ENCODE measurements at regions of chr1 and their contacts with region 1.

Region 1: GRCh38 chr1:19390901-19391595 is 78.9 kb downstream of the SLC66A1 start:
- DNase-seq: peak; percentile 45 to 87
- ATAC-seq: peak; percentile 74 to 85 (median 81)
- H3K4me3 ChIP-seq: peak overlapping the region; percentile 12
- H3K4me3 Mint-ChIP-seq: peak overlapping the region; percentile 90
- H3K27ac ChIP-seq: peak overlapping the region; percentile 56
- H3K27ac Mint-ChIP-seq: peak overlapping the region; percentile 94 to 96
- H3K4me1 ChIP-seq: peaks cover 56% of the 10 kb centered on the region
- H3K4me1 Mint-ChIP-seq: peaks cover 64 to 83% of the 10 kb centered on the region in 2 donors
- H3K27me3 ChIP-seq: no peaks in the 10 kb centered on the region
- H3K27me3 Mint-ChIP-seq: no peaks in the 10 kb centered on the region
- CTCF ChIP-seq: peak; percentile 82

Region 2: GRCh38 chr1:19189270-19189669 is 201.8 kb before region 1 on chr1:
- intact Hi-C with region 1: no loop called
- DNase-seq: no peak
- ATAC-seq: no peak
- H3K4me3 ChIP-seq: no peak overlapping the region
- H3K4me3 Mint-ChIP-seq: no peak overlapping the region
- H3K27ac ChIP-seq: no peak overlapping the region
- H3K27ac Mint-ChIP-seq: no peak overlapping the region
- H3K4me1 ChIP-seq: no peaks in the 10 kb centered on the region
- H3K4me1 Mint-ChIP-seq: peaks cover 0 to 9% of the 10 kb centered on the region in 2 donors
- H3K27me3 ChIP-seq: no peaks in the 10 kb centered on the region
- H3K27me3 Mint-ChIP-seq: no peaks in the 10 kb centered on the region
- CTCF ChIP-seq: no peak

Region 3: GRCh38 chr1:19462781-19463503 is 71.9 kb after region 1 on chr1:
- intact Hi-C with region 1: loop called (anchors 5 kb)
- DNase-seq: peak; percentile 39 to 87
- ATAC-seq: peak; percentile 86 to 93 (median 89)
- H3K4me3 ChIP-seq: no peak overlapping the region
- H3K4me3 Mint-ChIP-seq: peak overlapping the region; percentile 91
- H3K27ac ChIP-seq: peak overlapping the region; percentile 85
- H3K27ac Mint-ChIP-seq: peak overlapping the region; percentile 89 to 92
- H3K4me1 ChIP-seq: peaks cover 86% of the 10 kb centered on the region
- H3K4me1 Mint-ChIP-seq: peaks cover 63 to 70% of the 10 kb centered on the region in 2 donors
- H3K27me3 ChIP-seq: no peaks in the 10 kb centered on the region
- H3K27me3 Mint-ChIP-seq: no peaks in the 10 kb centered on the region
- CTCF ChIP-seq: no peak

Region 4: GRCh38 chr1:19477284-19478249 is 86.5 kb after region 1 on chr1:
- intact Hi-C with region 1: loop called (anchors 5 kb)
- DNase-seq: peak; percentile 55 to 74
- ATAC-seq: peak; percentile 73 to 85 (median 77)
- H3K4me3 ChIP-seq: peak overlapping the region; percentile 34
- H3K4me3 Mint-ChIP-seq: peak overlapping the region; percentile 88
- H3K27ac ChIP-seq: peak overlapping the region; percentile 97
- H3K27ac Mint-ChIP-seq: peak overlapping the region; percentile 97 to 98
- H3K4me1 ChIP-seq: peaks cover 85% of the 10 kb centered on the region
- H3K4me1 Mint-ChIP-seq: peaks cover 79 to 80% of the 10 kb centered on the region in 2 donors
- H3K27me3 ChIP-seq: no peaks in the 10 kb centered on the region
- H3K27me3 Mint-ChIP-seq: no peaks in the 10 kb centered on the region
- CTCF ChIP-seq: no peak

Region 5: DNA sequence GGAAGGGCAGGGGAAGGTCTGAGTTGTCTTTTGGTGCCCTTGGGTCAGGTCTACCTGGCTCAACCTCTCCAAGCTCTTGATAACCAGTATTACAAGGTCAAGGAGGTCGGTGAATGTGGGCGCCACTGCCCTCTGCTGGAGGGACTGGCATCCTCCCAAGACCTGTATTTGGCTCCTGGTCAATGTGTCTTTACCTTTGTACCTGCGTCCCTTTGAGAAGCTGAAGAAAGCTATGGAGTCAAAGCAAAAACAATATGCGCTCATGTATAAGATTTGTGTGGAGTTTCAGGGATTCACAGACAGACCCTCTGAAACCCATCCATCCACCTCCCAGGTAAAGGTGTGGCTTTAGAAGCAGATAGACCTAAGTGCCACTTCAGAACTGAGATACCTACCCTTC is 191.3 kb after region 1 on chr1:
- intact Hi-C with region 1: loop called (anchors 1 kb)
- DNase-seq: peak; percentile 70 to 86
- ATAC-seq: peak; percentile 77 to 97 (median 95)
- H3K4me3 ChIP-seq: no peak overlapping the region
- H3K4me3 Mint-ChIP-seq: no peak overlapping the region
- H3K27ac ChIP-seq: no peak overlapping the region
- H3K27ac Mint-ChIP-seq: no peak overlapping the region
- H3K4me1 ChIP-seq: no peaks in the 10 kb centered on the region
- H3K4me1 Mint-ChIP-seq: no peaks in the 10 kb centered on the region
- H3K27me3 ChIP-seq: no peaks in the 10 kb centered on the region
- H3K27me3 Mint-ChIP-seq: no peaks in the 10 kb centered on the region
- CTCF ChIP-seq: peak; percentile 84

Region 6: DNA sequence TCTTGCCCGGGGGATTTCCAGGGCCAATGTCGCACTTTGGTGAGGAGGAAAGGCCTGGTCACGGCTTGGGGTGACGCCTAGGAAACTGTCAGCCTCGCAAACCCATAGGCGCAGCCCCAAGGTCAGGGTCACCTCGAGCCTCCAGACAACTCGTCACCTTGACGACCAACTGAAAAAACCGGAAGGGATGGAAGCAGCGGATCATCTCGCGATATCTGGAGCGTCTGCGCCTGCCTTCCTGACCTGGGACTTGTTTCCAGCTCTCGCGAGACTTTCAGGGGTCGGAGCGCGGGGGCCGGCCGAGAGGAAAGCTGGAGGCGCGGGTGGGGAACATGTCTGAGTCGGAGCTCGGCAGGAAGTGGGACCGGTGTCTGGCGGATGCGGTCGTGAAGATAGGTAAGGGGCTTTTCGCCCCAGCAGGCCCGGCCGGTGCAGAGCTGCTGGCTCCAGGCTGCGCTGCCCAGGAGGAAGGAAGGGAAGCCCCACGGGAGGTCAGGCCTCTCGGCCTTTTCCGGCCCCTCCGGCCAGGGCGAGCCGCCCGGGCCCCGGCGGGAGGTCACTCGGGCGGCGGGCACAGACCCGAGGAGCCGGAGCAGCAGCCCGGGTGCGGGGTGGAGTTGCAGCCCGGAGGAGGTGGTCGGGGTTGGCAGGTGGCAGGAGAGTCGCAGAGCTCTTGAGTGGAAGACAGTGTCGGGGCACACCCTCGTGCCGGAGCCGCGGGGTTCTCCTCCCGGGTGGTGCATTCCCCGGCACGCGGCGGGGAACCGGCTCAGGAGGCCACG is 205.9 kb after region 1 on chr1:
- intact Hi-C with region 1: loop called (anchors 5 kb)
- DNase-seq: peak; percentile 94 to 100
- ATAC-seq: peak; percentile 77 to 89 (median 80)
- H3K4me3 ChIP-seq: peak overlapping the region; percentile 78
- H3K4me3 Mint-ChIP-seq: peak overlapping the region; percentile 100
- H3K27ac ChIP-seq: peak overlapping the region; percentile 99
- H3K27ac Mint-ChIP-seq: peak overlapping the region; percentile 98 to 100
- H3K4me1 ChIP-seq: peaks cover 29% of the 10 kb centered on the region
- H3K4me1 Mint-ChIP-seq: peaks cover 39 to 45% of the 10 kb centered on the region in 2 donors
- H3K27me3 ChIP-seq: no peaks in the 10 kb centered on the region
- H3K27me3 Mint-ChIP-seq: no peaks in the 10 kb centered on the region
- CTCF ChIP-seq: no peak

Region 7: GRCh38 chr1:19651141-19651737 is 260.2 kb after region 1 on chr1:
- intact Hi-C with region 1: loop called (anchors 1 kb)
- DNase-seq: peak in 1 of 2 donors; percentile 75
- ATAC-seq: peak; percentile 45 to 63 (median 63)
- H3K4me3 ChIP-seq: no peak overlapping the region
- H3K4me3 Mint-ChIP-seq: no peak overlapping the region
- H3K27ac ChIP-seq: no peak overlapping the region
- H3K27ac Mint-ChIP-seq: no peak overlapping the region
- H3K4me1 ChIP-seq: peaks cover 8% of the 10 kb centered on the region
- H3K4me1 Mint-ChIP-seq: peaks cover 6 to 7% of the 10 kb centered on the region in 2 donors
- H3K27me3 ChIP-seq: no peaks in the 10 kb centered on the region
- H3K27me3 Mint-ChIP-seq: peaks cover 0 to 5% of the 10 kb centered on the region in 2 donors
- CTCF ChIP-seq: peak; percentile 20

Measured in natural killer cell (primary cell).